Testis (tissue), 5 donors: ENCODE measurements at regions of chr15 and their contacts with region 1.

Region 1: DNA sequence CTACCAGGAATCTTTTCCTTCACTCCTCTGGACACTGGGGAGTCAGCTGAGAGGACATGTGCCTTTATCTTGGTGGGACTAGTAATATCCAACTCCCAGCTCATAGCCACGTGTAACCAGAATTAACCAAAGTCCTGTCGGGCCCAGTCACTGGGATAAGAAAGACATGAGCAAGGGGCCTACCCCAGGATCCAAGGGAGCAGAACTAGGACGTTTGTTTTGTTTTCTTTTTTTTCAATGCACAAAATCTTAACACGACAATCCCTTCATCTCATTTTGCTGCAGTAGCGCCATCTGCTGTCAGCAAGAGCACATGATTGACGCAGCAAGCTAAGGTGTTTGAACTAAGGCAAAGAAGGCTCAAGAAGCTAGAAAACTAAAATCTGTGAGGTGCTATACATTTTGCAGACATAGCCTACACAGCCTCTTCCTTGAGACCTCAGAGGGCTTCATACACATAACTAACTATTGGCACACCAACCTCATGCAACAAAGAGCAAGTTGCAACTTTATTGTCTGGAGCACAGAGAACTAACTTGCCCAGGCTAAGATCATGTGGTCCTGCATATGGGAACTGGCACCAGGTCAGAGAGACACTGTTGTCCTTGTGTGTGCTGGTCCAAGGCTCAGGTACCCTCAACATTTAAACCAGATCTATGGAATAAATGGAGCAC is 43.6 kb downstream of the RLBP1 start:
- DNase-seq: peak; percentile 70
- H3K4me3 ChIP-seq: no peak overlapping the region
- H3K27ac ChIP-seq: no peak overlapping the region
- H3K4me1 ChIP-seq: peaks cover 3% of the 10 kb centered on the region
- H3K27me3 ChIP-seq: no peaks in the 10 kb centered on the region
- CTCF ChIP-seq: peak; percentile 79 to 85 (median 81)
- POLR2A ChIP-seq: no peak

Region 2: DNA sequence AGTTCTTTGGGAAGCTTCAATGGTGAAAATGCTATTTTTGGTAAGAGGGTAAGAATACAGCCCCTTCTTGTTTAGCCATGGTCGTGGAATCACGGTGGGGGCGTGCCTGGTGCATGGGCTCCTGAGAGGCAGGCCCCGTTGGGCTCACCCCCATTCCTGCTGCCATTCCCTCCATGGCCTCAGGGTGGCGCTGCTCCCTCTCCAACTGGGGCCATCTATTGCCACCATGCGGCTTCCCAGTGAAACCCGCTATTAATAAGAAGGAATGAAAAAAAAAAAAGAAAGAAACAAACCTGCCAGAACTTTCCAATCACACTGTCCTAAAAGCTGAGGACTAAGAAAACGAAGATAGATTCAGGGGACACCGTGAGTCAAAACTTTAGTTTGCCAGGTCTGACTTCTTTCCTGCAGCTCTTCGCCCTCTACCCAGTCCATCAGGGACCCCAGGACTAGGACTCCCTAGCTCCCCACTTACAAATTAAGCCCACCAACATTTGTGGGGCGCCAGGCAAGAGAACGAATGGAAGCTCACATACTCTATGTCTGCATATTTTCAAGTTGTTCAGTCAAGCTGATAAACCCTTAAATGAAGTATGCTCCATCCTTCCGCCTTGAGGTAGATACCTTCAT is 120.2 kb before region 1 on chr15:
- intact Hi-C with region 1: loop called (anchors 5 kb)
- DNase-seq: peak; percentile 88
- H3K4me3 ChIP-seq: no peak overlapping the region
- H3K27ac ChIP-seq: no peak overlapping the region
- H3K4me1 ChIP-seq: no peaks in the 10 kb centered on the region
- H3K27me3 ChIP-seq: no peaks in the 10 kb centered on the region
- CTCF ChIP-seq: peak; percentile 93 to 98 (median 97)
- POLR2A ChIP-seq: no peak